ENCODE measurements at regions of chrX and their contacts with region 1.

Region 1: GRCh38 chrX:8971116-8971515 is 62.8 kb downstream of the FAM9B start:
- DNase-seq: peak in 3 of 14 experiments; percentile 64 to 66 (median 65)
- ATAC-seq: peak; percentile 74
- H3K4me3 ChIP-seq: no peak overlapping the region
- H3K4me3 Mint-ChIP-seq: no peak overlapping the region
- H3K27ac ChIP-seq: no peak overlapping the region
- H3K27ac Mint-ChIP-seq: no peak overlapping the region
- H3K4me1 ChIP-seq: no peaks in the 10 kb centered on the region
- H3K4me1 Mint-ChIP-seq: no peaks in the 10 kb centered on the region
- H3K27me3 ChIP-seq: no peaks in the 10 kb centered on the region
- H3K27me3 Mint-ChIP-seq: peaks cover 2% of the 10 kb centered on the region
- CTCF ChIP-seq: peak; percentile 46

Region 2: DNA sequence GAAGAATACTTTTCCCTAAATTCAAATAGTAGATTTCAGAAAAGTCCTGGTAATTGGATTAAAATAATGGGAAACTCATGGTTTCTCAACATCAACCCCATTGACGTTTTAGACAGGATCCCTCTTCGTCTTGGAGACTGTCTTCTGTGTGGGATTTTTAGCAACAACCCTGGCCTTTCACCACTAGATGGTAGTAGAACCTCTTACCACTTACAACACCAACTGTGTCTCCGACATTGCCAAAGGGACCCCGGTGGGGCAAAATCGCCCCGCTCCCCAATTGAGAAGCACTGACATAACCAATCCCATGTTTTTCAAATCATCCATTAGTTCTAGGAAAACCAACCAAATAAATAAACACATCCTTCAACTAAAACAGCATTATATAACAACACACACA is 222.3 kb before region 1 on chrX:
- CTCF ChIA-PET with region 1: no interaction called
- POLR2A ChIA-PET with region 1: no interaction called
- intact Hi-C with region 1: loop called in 1 of 2 experiments (anchors 5 kb)
- DNase-seq: peak in 3 of 14 experiments; percentile 27 to 39 (median 29)
- ATAC-seq: no peak
- H3K4me3 ChIP-seq: no peak overlapping the region
- H3K4me3 Mint-ChIP-seq: no peak overlapping the region
- H3K27ac ChIP-seq: no peak overlapping the region
- H3K27ac Mint-ChIP-seq: no peak overlapping the region
- H3K4me1 ChIP-seq: no peaks in the 10 kb centered on the region
- H3K4me1 Mint-ChIP-seq: no peaks in the 10 kb centered on the region
- H3K27me3 ChIP-seq: no peaks in the 10 kb centered on the region
- H3K27me3 Mint-ChIP-seq: peaks cover 8% of the 10 kb centered on the region
- CTCF ChIP-seq: peak; percentile 33

Region 3: GRCh38 chrX:9207142-9207541 is 236.0 kb after region 1 on chrX:
- CTCF ChIA-PET with region 1: no interaction called
- POLR2A ChIA-PET with region 1: no interaction called
- intact Hi-C with region 1: no loop called
- DNase-seq: no peak
- ATAC-seq: no peak
- H3K4me3 ChIP-seq: no peak overlapping the region
- H3K4me3 Mint-ChIP-seq: no peak overlapping the region
- H3K27ac ChIP-seq: no peak overlapping the region
- H3K27ac Mint-ChIP-seq: no peak overlapping the region
- H3K4me1 ChIP-seq: no peaks in the 10 kb centered on the region
- H3K4me1 Mint-ChIP-seq: no peaks in the 10 kb centered on the region
- H3K27me3 ChIP-seq: no peaks in the 10 kb centered on the region
- H3K27me3 Mint-ChIP-seq: no peaks in the 10 kb centered on the region
- CTCF ChIP-seq: no peak

Region 4: DNA sequence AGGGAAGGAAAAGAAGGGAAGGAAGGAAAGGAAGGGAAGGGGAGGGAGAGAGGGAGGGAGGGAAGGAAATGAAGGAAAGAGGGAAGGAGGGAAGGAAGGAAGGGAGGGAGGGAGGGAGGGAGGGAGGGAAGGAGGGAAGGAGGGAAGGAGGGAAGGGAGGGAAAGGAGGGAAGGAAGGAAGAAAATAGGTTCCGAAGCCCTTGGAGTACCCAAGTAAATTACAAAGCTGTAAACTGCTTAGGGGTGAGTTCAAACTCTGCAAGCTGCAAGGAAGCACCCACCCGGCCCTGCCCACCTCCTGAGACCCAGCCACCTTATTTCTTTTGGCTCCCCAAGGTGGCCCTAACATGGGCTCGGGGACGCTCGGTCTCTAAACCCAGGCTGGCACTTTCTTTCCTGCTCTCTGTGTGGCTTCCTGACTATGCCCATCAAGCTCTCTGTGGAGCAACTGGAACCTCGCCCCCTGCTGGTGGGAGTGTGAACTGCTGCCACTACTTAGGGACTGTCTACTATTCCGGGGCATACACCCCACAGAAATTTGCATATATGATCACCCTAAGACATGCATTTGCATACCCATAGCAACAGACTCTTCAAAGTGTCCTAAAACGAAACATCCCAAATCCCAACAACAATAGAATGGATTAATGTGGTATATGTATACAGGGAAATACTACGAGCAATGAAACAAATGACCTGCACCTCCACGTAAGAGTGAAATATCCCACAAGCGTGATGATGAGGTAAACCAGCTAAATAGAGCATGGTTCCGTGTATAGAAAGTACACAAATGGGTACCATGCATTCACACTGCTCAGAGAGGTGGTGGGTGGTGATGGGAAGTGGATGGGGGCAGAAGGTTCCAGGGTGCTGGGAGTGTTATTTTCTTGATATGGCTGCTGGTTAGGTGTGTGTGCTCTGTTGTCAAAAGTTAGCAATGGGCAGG is 342.1 kb after region 1 on chrX:
- CTCF ChIA-PET with region 1: interaction called, 4 read pairs
- POLR2A ChIA-PET with region 1: no interaction called
- intact Hi-C with region 1: loop called (anchors 1 to 5 kb)
- DNase-seq: peak; percentile 54 to 85 (median 70)
- ATAC-seq: peak; percentile 71
- H3K4me3 ChIP-seq: no peak overlapping the region
- H3K4me3 Mint-ChIP-seq: no peak overlapping the region
- H3K27ac ChIP-seq: no peak overlapping the region
- H3K27ac Mint-ChIP-seq: no peak overlapping the region
- H3K4me1 ChIP-seq: peaks cover 12% of the 10 kb centered on the region
- H3K4me1 Mint-ChIP-seq: peaks cover 15% of the 10 kb centered on the region
- H3K27me3 ChIP-seq: no peaks in the 10 kb centered on the region
- H3K27me3 Mint-ChIP-seq: no peaks in the 10 kb centered on the region
- CTCF ChIP-seq: peak; percentile 61

Measured in CD4-positive, alpha-beta T cell (primary cell).